Ovary (tissue), 10 donors: ENCODE measurements at regions of chr3 and their contacts with region 1.

Region 1: GRCh38 chr3:52220380-52221026 is 4.9 kb downstream of the TLR9 start:
- DNase-seq: peak; percentile 84 to 93 (median 89)
- H3K4me3 ChIP-seq: no peak overlapping the region
- H3K27ac ChIP-seq: no peak overlapping the region
- H3K4me1 ChIP-seq: peaks cover 15% of the 10 kb centered on the region
- H3K27me3 ChIP-seq: no peaks in the 10 kb centered on the region
- CTCF ChIP-seq: peak; percentile 77 to 91 (median 82)
- EP300 ChIP-seq: no peak
- POLR2A ChIP-seq: no peak

Region 2: GRCh38 chr3:52062499-52062898 is 158.0 kb before region 1 on chr3:
- intact Hi-C with region 1: no loop called
- DNase-seq: no peak
- H3K4me3 ChIP-seq: no peak overlapping the region
- H3K27ac ChIP-seq: no peak overlapping the region
- H3K4me1 ChIP-seq: no peaks in the 10 kb centered on the region
- H3K27me3 ChIP-seq: no peaks in the 10 kb centered on the region
- CTCF ChIP-seq: no peak
- EP300 ChIP-seq: no peak
- POLR2A ChIP-seq: no peak

Region 3: DNA sequence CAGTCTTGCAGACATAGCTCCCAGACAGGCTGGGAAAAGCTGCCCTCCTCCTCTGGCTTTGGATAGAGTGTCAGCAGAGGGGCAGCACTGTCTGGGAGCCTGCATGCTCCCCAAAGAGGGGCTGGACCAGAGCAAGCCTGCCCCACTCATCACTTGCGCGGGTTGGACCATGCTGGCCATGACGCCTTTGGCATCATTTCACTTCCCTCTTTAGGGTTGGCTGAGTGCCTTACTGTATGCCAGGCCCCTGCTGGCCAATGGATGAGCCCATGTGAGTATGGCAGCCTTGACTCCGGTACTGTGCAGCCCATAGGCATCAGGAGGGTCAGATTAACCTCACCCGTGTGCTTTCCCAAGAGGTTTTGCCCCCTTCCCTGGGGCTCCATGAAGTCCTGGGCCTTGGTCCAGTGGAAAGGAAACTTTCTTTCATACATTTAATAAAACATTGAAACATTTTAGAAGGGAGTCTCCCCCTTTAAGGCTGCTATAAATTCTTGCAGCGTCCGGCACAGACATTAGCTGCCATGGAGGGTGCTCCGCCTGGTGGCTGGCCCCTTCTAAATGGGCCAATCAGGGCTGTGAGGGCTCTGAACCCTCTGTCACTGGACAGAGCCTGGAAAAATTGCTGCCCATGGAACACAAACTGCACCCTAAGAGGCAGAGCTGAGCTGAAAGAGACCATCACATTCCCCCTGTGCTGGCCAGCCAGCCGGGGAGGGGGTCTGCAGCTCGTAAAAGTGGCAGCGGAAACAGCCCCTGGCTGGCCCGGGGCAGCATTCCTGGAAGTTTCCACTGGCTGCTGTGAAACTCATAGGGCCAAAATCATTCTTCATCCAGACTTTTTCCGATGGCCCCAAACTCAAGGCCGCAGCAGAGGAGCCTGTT is 143.4 kb before region 1 on chr3:
- intact Hi-C with region 1: no loop called
- DNase-seq: peak in 3 of 5 donors; percentile 48 to 63 (median 52)
- H3K4me3 ChIP-seq: no peak overlapping the region
- H3K27ac ChIP-seq: peak overlapping the region; percentile 73 to 86
- H3K4me1 ChIP-seq: peaks cover 11% of the 10 kb centered on the region
- H3K27me3 ChIP-seq: no peaks in the 10 kb centered on the region
- CTCF ChIP-seq: peak in 1 of 3 donors; percentile 31
- EP300 ChIP-seq: no peak
- POLR2A ChIP-seq: no peak

Region 4: GRCh38 chr3:52278510-52279069 is 58.1 kb after region 1 on chr3 and contains the start of gene WDR82:
- intact Hi-C with region 1: loop called in 1 of 4 experiments (anchors 10 kb)
- DNase-seq: peak; percentile 98 to 99 (median 98)
- H3K4me3 ChIP-seq: peak within 1 kb of the TSS; percentile 51
- H3K27ac ChIP-seq: peak within 1 kb of the TSS; percentile 93
- H3K4me1 ChIP-seq: peaks cover 21% of the 10 kb centered on the region
- H3K27me3 ChIP-seq: no peaks in the 10 kb centered on the region
- CTCF ChIP-seq: peak; percentile 40 to 54 (median 49)
- EP300 ChIP-seq: no peak
- POLR2A ChIP-seq: peak; percentile 83
- total RNA-seq, gene WDR82: 36.4 to 104 (median 95.2) TPM

Region 5: DNA sequence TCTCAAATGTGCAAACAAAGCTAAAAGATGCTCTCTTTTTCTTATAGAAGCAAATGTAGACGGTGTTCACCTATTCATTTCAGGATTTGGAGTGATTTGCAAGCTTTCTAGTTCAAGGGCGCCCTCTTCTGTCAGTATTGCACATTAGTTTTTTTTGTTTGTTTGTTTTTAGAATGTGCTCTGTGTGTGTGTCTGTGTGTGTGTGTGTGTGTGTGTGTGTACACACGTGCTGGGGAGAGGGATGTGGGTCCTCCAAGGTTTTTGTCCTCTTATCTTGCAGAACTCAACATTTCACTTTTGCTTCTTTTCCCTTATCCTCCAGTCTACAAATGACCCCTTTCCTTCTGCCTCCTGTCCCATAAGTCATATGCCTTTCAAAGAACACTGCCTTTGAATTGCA is 119.1 kb after region 1 on chr3:
- intact Hi-C with region 1: loop called in 3 of 4 experiments (anchors 2 to 5 kb)
- DNase-seq: peak in 2 of 5 donors; percentile 42 to 55
- H3K4me3 ChIP-seq: no peak overlapping the region
- H3K27ac ChIP-seq: no peak overlapping the region
- H3K4me1 ChIP-seq: peaks cover 1% of the 10 kb centered on the region
- H3K27me3 ChIP-seq: no peaks in the 10 kb centered on the region
- CTCF ChIP-seq: peak; percentile 50 to 75 (median 68)
- EP300 ChIP-seq: no peak
- POLR2A ChIP-seq: no peak

Region 6: DNA sequence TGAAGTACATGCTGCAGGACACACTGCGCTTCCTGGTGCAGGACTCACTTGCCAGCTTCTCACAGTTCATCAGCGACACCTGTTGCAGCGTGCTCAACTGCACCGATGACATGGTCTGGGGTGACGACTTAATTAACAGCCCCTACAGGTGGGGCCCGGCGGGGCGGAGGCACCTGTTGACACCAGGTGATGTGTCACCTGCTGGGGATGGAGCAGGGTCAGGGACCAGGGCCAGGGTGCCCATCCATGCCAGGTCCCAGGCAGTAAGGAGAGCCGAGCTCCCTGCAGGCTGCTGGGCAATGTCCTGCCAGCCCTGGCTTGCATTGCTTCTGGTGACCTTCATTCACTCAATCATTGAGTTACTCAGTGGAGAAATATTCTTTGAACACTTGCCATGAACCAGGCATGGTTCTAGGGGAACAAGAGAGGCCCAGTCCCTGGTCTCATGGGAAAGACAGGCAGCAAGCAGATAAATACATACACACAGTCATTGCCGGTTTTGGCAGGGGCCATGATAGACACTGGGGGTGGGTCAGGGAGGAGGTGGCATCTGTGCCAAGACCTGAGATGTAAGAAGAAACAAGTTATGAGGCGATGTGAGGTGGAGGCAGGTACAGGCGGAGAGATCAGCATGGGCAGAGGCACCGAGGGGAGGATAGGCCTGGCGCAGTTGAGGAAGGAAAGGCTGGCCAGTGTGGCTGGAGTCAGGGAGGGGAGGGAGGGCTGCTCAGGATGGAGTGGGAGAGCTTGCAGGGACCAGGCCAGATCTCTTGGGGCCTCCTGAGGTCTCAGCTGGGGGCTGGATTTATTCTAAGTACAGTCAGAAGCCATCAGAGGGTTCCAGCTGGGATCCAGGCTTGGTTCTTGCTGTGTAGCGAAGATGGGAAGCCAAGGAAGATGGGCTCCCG is 126.4 kb after region 1 on chr3:
- intact Hi-C with region 1: loop called (anchors 2 to 5 kb)
- DNase-seq: no peak
- H3K4me3 ChIP-seq: no peak overlapping the region
- H3K27ac ChIP-seq: no peak overlapping the region
- H3K4me1 ChIP-seq: no peaks in the 10 kb centered on the region
- H3K27me3 ChIP-seq: no peaks in the 10 kb centered on the region
- CTCF ChIP-seq: no peak
- EP300 ChIP-seq: no peak
- POLR2A ChIP-seq: no peak